ENCODE measurements at regions of chr17 and their contacts with region 1.

Region 1: DNA sequence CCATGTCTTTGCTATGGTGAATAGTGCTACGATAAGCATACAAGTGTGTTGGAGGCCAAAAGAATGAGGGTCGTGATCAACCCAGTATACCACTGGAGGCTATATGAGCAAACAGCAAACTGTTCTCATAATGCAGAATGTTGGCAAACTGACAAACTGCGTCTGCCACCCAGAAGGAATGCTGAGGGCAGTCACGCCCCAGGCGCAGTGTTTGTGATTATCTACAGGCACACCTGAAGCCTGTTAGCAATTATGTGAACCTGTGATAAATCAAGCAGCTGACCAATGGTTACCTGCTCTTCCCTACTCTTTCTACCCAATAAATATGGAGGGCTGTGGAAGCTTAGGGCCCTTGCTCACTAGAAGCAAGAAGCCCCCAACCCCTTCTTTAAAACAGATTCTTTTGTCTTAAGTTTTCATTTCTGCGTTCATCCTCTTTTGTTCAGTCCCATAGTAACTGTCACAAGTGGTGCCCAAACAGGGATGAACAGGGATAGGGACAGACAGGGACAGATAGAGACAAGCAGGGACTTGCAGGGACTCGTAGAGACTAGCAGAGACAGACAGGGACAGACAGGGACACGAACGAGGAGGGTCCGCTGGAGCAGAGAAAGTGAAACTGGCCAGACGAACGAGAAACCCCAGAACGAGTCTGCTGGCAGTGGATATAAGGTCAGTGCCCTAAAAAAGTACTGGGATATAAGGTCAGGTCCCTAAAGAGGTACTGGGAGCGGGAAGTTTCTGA is 25.1 kb downstream of the CD300LG start:
- DNase-seq: no peak
- ATAC-seq: peak in 1 of 2 donors; percentile 20

Region 2: GRCh38 chr17:43823350-43824084 is 48.6 kb before region 1 on chr17:
- intact Hi-C with region 1: loop called in 1 of 2 experiments (anchors 2 kb)
- DNase-seq: peak; percentile 77
- ATAC-seq: peak; percentile 80 to 86